Activated naive CD4-positive, alpha-beta T cell treated with anti-CD3 and anti-CD28 coated beads for 36 hours (primary cell): ENCODE measurements at regions of chr17 and their contacts with region 1.

Region 1: DNA sequence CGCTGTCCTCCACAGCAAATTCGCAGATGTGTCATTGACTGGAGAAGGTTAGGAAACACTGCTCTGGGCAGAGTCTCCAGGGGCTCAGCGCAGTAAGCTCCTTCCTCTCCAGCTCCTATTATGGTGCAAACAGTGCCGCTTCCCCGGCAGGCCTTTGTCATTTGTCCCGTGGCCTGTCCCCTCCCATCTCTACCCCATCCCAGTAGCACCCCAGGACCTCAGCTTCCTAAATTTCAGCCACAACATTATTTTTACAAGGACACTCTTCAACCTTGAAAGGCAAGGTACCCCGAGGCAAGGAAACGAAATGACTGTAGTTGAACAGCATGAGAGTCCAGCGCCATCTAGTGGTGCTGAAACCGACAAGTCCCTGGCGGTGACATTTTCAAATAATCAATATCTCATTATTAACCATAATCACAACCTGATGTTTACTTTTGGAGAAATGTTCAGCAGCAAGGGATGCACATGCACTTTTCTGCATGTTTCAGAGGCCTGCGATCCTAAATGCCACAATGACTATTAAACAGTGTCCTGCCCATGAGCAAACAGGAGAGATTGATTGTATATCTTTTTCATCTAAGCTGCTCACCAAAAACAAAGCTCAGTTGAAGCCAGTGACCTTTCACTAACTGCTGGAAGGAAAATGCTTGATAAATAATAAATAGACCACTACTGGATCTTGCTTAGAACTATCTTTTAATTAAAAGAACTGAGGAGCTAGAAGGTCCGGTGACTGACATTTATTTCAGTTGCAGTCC is 16.5 kb downstream of the MRPS23 start:
- DNase-seq: peak; percentile 83
- H3K4me3 Mint-ChIP-seq: no peak overlapping the region
- H3K27ac Mint-ChIP-seq: no peak overlapping the region
- H3K4me1 Mint-ChIP-seq: peaks cover 4% of the 10 kb centered on the region
- H3K27me3 Mint-ChIP-seq: no peaks in the 10 kb centered on the region

Region 2: GRCh38 chr17:57130761-57131461 is 702.4 kb before region 1 on chr17:
- CTCF ChIA-PET with region 1: interaction called, 10 read pairs
- intact Hi-C with region 1: loop called (anchors 1 kb)
- DNase-seq: peak; percentile 91
- H3K4me3 Mint-ChIP-seq: no peak overlapping the region
- H3K27ac Mint-ChIP-seq: no peak overlapping the region
- H3K4me1 Mint-ChIP-seq: peaks cover 8% of the 10 kb centered on the region
- H3K27me3 Mint-ChIP-seq: no peaks in the 10 kb centered on the region

Region 3: DNA sequence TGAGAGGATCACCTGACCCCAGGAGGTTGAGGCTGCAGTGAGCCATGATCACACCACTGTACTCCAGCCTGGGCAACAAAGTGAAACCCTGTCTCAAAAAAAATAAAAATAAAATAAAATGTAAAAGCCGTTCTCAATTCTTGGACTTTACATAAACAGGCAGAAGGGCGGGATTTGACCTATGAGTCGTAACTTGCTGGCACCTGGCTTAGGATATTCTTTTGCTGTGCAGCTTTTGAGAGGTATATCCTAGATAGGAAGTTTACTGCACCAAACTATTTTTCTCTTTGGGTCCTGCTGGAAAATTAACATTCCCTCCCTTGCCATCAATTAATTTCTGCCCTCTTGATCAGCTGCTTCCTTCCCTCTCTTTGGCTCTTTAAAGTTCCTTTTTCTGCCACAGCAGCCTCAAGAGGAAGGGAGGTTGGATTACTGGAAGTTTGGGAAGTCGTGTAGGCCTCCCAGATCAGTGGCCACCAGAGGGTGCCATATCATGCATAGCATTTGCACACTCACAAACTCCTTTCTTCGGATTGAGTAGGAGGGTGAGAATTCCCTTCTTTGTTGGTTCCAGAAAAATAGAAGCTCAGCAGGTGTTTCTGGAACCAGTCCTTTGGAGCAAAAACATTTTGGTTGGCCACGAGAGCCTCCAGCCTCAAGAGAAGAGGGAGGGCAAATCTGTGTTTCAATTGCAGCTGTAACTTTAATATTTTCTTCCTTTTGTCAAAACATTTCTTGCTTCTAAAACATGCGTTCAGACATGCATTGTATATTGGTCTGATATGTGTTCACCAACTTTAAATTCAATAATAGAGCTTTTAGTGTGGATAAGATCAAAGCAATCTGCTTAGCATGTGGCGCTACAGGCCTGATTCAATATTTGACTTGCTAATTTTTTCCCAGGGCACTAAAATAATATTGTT is 235.6 kb before region 1 on chr17:
- CTCF ChIA-PET with region 1: no interaction called
- intact Hi-C with region 1: loop called (anchors 1 kb)
- DNase-seq: peak; percentile 72
- H3K4me3 Mint-ChIP-seq: no peak overlapping the region
- H3K27ac Mint-ChIP-seq: peak overlapping the region; percentile 96
- H3K4me1 Mint-ChIP-seq: peaks cover 51% of the 10 kb centered on the region
- H3K27me3 Mint-ChIP-seq: no peaks in the 10 kb centered on the region

Region 4: GRCh38 chr17:57806167-57806830 is 27.1 kb before region 1 on chr17:
- CTCF ChIA-PET with region 1: interaction called, 17 read pairs
- intact Hi-C with region 1: no loop called
- DNase-seq: no peak
- H3K4me3 Mint-ChIP-seq: no peak overlapping the region
- H3K27ac Mint-ChIP-seq: no peak overlapping the region
- H3K4me1 Mint-ChIP-seq: peaks cover 10% of the 10 kb centered on the region
- H3K27me3 Mint-ChIP-seq: peaks cover 27% of the 10 kb centered on the region

Region 5: DNA sequence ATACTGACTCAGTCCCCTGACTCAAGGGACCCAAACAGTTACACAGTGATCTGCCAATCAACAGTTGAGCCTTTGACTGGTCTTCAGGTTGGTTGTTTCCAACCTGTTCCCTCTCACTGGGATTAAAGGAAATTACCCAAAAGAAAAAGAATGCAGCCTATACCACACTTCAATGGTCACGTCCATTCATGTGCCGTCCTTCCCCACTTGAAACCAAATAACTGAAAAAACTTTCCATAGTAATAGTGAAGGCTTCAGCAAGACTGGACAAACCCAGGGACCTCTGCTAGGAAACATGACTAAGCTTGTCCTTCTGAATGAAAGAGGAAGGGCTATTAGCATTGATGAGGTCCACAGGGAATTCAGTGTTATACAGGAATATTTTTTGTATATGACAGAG is 14.1 kb before region 1 on chr17:
- CTCF ChIA-PET with region 1: interaction called, 17 read pairs
- intact Hi-C with region 1: no loop called
- DNase-seq: no peak
- H3K4me3 Mint-ChIP-seq: no peak overlapping the region
- H3K27ac Mint-ChIP-seq: no peak overlapping the region
- H3K4me1 Mint-ChIP-seq: no peaks in the 10 kb centered on the region
- H3K27me3 Mint-ChIP-seq: peaks cover 4% of the 10 kb centered on the region